ENCODE measurements at regions of chrX and their contacts with region 1.

Region 1: GRCh38 chrX:71365876-71366673 is at the start of gene TAF1:
- DNase-seq: peak; percentile 61 to 94 (median 90)
- ATAC-seq: peak; percentile 93
- H3K4me3 ChIP-seq: peak within 1 kb of the TSS; percentile 81
- H3K4me3 Mint-ChIP-seq: peak within 1 kb of the TSS; percentile 86 to 99 (median 96)
- H3K27ac ChIP-seq: peak within 1 kb of the TSS; percentile 94
- H3K27ac Mint-ChIP-seq: peak within 1 kb of the TSS; percentile 97 to 100 (median 98)
- H3K4me1 ChIP-seq: peaks cover 5 to 9% of the 10 kb centered on the region in 2 donors
- H3K4me1 Mint-ChIP-seq: peaks cover 12 to 34% (median 27%) of the 10 kb centered on the region in 7 donors
- H3K27me3 ChIP-seq: no peaks in the 10 kb centered on the region
- H3K27me3 Mint-ChIP-seq: no peaks in the 10 kb centered on the region
- total RNA-seq, gene TAF1: 55.4 to 86.7 (median 76.1) TPM

Region 2: GRCh38 chrX:69795702-69796101 is 1570.4 kb before region 1 on chrX:
- CTCF ChIA-PET with region 1: no interaction called
- POLR2A ChIA-PET with region 1: no interaction called
- intact Hi-C with region 1: no loop called
- DNase-seq: no peak
- ATAC-seq: no peak
- H3K4me3 ChIP-seq: no peak overlapping the region
- H3K4me3 Mint-ChIP-seq: no peak overlapping the region
- H3K27ac ChIP-seq: no peak overlapping the region
- H3K27ac Mint-ChIP-seq: no peak overlapping the region
- H3K4me1 ChIP-seq: no peaks in the 10 kb centered on the region
- H3K4me1 Mint-ChIP-seq: peaks cover 0 to 1% (median 0%) of the 10 kb centered on the region in 7 donors
- H3K27me3 ChIP-seq: no peaks in the 10 kb centered on the region
- H3K27me3 Mint-ChIP-seq: no peaks in the 10 kb centered on the region

Region 3: DNA sequence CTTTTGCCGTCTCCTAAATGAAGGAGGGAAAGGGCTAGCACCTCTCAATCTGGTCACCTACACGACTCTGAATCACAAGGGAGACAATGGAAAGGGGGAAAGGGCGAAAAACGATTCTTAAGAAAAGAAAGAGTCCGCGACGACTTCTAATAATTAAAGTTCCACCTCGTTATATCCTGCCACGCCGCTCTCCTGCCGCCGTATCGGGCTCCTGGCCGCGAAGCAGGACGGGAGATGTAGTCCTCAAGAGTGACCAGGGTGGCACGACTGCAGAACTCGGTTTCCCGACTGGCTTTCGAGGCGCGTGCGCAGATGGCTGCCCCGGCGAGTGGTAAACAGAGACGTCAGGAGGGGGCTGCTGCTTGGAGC is 270.5 kb before region 1 on chrX and contains the start of gene FOXO4:
- CTCF ChIA-PET with region 1: no interaction called
- POLR2A ChIA-PET with region 1: interaction called, 6 read pairs
- intact Hi-C with region 1: loop called (anchors 2 kb)
- DNase-seq: peak; percentile 69 to 91 (median 82)
- ATAC-seq: peak; percentile 92
- H3K4me3 ChIP-seq: peak within 1 kb of the TSS; percentile 70
- H3K4me3 Mint-ChIP-seq: peak within 1 kb of the TSS; percentile 90 to 100 (median 96)
- H3K27ac ChIP-seq: peak within 1 kb of the TSS; percentile 85
- H3K27ac Mint-ChIP-seq: peak within 1 kb of the TSS; percentile 91 to 97 (median 95)
- H3K4me1 ChIP-seq: peaks cover 20 to 21% of the 10 kb centered on the region in 2 donors
- H3K4me1 Mint-ChIP-seq: peaks cover 11 to 40% (median 32%) of the 10 kb centered on the region in 7 donors
- H3K27me3 ChIP-seq: no peaks in the 10 kb centered on the region
- H3K27me3 Mint-ChIP-seq: peaks cover 0 to 6% (median 0%) of the 10 kb centered on the region in 5 donors
- total RNA-seq, gene FOXO4: 11.9 to 40.6 (median 30.0) TPM

Region 4: GRCh38 chrX:71198066-71198465 is 168.0 kb before region 1 on chrX:
- CTCF ChIA-PET with region 1: no interaction called
- POLR2A ChIA-PET with region 1: interaction called, 15 read pairs
- intact Hi-C with region 1: loop called in 1 of 2 experiments (anchors 5 kb)
- DNase-seq: peak in 7 of 9 donors; percentile 8 to 40 (median 20)
- ATAC-seq: peak; percentile 69
- H3K4me3 ChIP-seq: peak overlapping the region; percentile 62
- H3K4me3 Mint-ChIP-seq: peak overlapping the region; percentile 79 to 94 (median 90)
- H3K27ac ChIP-seq: peak overlapping the region; percentile 50
- H3K27ac Mint-ChIP-seq: peak overlapping the region; percentile 80 to 94 (median 89)
- H3K4me1 ChIP-seq: peaks cover 0 to 4% of the 10 kb centered on the region in 2 donors
- H3K4me1 Mint-ChIP-seq: peaks cover 18 to 35% (median 25%) of the 10 kb centered on the region in 7 donors
- H3K27me3 ChIP-seq: no peaks in the 10 kb centered on the region
- H3K27me3 Mint-ChIP-seq: no peaks in the 10 kb centered on the region

Region 5: DNA sequence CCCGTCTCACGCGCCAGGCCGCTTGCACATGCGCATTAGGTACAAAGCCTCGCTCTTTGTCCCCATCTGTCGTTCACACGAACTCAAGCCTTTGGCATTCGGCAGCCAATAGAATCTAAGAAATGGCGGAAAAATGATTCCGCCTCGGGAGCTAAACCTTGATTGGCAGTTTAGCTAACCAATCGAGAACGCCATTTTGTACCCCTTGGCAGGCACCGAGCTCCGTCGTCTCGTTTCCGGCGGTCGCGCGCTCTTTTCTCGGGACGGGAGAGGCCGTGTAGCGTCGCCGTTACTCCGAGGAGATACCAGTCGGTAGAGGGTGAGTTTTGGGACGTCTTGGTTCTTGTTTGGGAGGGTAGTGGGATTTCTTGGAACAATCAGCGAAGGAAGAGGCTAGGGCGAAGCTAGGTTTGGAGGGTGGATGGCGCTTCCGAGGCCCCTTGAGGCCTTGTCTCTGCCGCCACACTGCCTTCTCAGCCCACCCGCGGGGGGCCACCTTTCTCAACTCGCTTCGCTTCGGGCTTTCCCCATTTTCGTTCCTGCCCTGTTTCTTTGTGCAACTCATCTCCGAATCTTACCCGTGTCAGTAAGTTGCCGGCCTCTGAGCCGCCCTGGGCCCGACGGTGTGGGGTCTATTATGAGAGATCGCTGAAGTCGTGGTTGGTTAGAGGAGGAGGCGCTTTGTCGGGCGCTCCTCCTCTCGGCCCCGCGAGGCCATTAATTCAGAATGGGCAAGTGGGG is 82.5 kb before region 1 on chrX and contains the start of gene NONO:
- CTCF ChIA-PET with region 1: interaction called, 3 read pairs
- POLR2A ChIA-PET with region 1: interaction called, 54 read pairs
- intact Hi-C with region 1: loop called (anchors 1 kb)
- DNase-seq: peak; percentile 48 to 96 (median 89)
- ATAC-seq: peak; percentile 91
- H3K4me3 ChIP-seq: peak within 1 kb of the TSS; percentile 88
- H3K4me3 Mint-ChIP-seq: peak within 1 kb of the TSS; percentile 94 to 99 (median 98)
- H3K27ac ChIP-seq: peak within 1 kb of the TSS; percentile 93
- H3K27ac Mint-ChIP-seq: peak within 1 kb of the TSS; percentile 97 to 100 (median 99)
- H3K4me1 ChIP-seq: peaks cover 0 to 8% of the 10 kb centered on the region in 2 donors
- H3K4me1 Mint-ChIP-seq: peaks cover under 1 to 28% (median 17%) of the 10 kb centered on the region in 7 donors
- H3K27me3 ChIP-seq: no peaks in the 10 kb centered on the region
- H3K27me3 Mint-ChIP-seq: peaks cover 0 to 3% (median 0%) of the 10 kb centered on the region in 5 donors
- total RNA-seq, gene NONO: 334 to 488 (median 371) TPM

Measured in naive thymus-derived CD4-positive, alpha-beta T cell (primary cell).